Mammary epithelial cell (primary cell): ENCODE measurements at regions of chr2 and their contacts with region 1.

Region 1: DNA sequence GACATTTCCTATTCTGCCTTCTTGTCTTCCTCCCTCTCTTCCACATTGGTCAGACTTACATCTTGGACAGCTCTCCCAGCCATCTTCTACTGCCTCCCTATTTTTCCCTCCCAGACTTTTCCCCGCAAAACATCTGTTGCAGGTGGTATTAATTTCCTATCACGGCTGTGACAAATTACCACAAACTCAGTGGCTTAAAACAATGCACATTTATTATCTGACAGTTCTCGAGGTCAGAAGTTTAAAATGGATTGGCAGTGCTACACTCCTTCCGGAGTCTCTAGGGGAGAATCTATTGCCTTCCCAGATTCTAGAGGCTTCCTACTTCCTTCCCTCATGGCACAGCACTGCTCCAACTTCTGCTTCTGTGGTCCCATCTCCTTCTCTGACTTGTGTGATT is 33.3 kb downstream of the STRADB start:
- DNase-seq: no peak
- H3K4me3 ChIP-seq: no peak overlapping the region
- H3K27ac ChIP-seq: no peak overlapping the region
- H3K4me1 ChIP-seq: no peaks in the 10 kb centered on the region
- H3K27me3 ChIP-seq: no peaks in the 10 kb centered on the region
- CTCF ChIP-seq: no peak

Region 2: GRCh38 chr2:201396595-201396994 is 88.2 kb before region 1 on chr2:
- CTCF ChIA-PET with region 1: no interaction called
- dilution Hi-C with region 1: no loop called
- in situ Hi-C with region 1: no loop called
- intact Hi-C with region 1: no loop called
- DNase-seq: no peak
- H3K4me3 ChIP-seq: no peak overlapping the region
- H3K27ac ChIP-seq: no peak overlapping the region
- H3K4me1 ChIP-seq: no peaks in the 10 kb centered on the region
- H3K27me3 ChIP-seq: no peaks in the 10 kb centered on the region
- CTCF ChIP-seq: no peak

Region 3: DNA sequence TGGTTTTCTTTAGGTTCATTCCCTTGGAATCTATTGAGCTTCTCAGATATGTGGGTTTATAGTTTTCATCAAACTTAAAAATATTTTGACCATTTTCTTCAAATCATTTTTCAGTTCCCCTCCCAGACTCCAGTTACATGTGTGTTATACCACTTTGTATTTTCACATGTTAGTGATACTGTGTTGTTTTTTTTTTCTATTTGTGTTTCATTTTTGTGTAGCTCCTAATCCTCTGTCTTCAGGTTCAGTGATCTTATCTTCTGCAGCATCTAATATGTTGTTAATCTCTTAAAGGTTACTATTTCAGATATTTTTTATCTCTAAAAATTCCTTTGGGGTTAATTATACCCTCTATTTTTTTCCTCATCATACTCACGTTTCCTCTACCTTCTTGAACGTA is 17.9 kb after region 1 on chr2:
- CTCF ChIA-PET with region 1: interaction called, 23 read pairs
- dilution Hi-C with region 1: no loop called
- in situ Hi-C with region 1: no loop called
- intact Hi-C with region 1: no loop called
- DNase-seq: no peak
- H3K4me3 ChIP-seq: no peak overlapping the region
- H3K27ac ChIP-seq: no peak overlapping the region
- H3K4me1 ChIP-seq: no peaks in the 10 kb centered on the region
- H3K27me3 ChIP-seq: no peaks in the 10 kb centered on the region
- CTCF ChIP-seq: no peak